ENCODE measurements at regions of chr10 and their contacts with region 1.

Region 1: GRCh38 chr10:48523820-48524758 is 80.8 kb downstream of the ARHGAP22 start:
- DNase-seq: no peak
- H3K4me3 ChIP-seq: peak overlapping the region; percentile 56 to 61 (median 59)
- H3K27ac ChIP-seq: peak overlapping the region in 3 of 4 donors; percentile 46 to 73 (median 64)
- H3K4me1 ChIP-seq: peaks cover 14 to 40% (median 35%) of the 10 kb centered on the region in 4 donors
- H3K27me3 ChIP-seq: peaks cover 0 to 12% (median 0%) of the 10 kb centered on the region in 4 donors
- CTCF ChIP-seq: peak; percentile 36 to 51 (median 41)
- EP300 ChIP-seq: no peak
- POLR2A ChIP-seq: no peak

Region 2: DNA sequence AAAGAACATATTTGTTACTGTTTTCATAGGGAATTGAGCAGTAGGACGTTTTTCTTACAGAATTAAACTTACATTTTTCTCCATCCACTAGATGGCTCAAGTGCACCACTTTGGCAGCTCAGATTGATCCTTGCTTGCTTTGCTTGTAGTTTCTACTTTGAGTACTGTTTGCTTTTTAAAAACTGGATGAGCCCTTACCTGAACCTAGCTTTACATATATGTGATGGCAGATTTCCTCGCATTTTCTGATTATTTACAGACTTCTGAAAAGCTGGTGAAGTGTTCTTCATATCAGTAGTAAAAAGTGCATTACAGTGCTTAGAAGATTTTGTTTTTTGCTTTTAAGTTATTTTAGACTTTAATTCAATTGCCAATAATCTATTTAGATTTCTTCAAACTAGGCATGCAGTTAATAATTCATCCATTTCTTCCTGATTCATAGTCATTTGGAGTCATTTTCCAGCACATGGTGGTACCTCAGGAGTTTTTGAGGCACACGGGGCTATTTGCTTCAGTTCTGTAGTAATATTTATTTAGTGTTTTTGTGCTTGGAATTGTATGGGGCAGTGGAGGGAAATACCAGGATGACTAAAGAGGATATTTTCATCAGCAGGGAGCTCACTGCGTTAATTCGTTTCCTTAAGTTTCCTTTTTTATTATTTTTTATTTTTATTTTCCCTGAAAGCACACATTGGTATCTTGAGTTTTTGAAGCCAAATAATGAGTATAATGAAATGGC is 160.3 kb before region 1 on chr10:
- intact Hi-C with region 1: loop called (anchors 10 kb)
- DNase-seq: no peak
- H3K4me3 ChIP-seq: no peak overlapping the region
- H3K27ac ChIP-seq: no peak overlapping the region
- H3K4me1 ChIP-seq: peaks cover 10 to 40% (median 37%) of the 10 kb centered on the region in 4 donors
- H3K27me3 ChIP-seq: no peaks in the 10 kb centered on the region
- CTCF ChIP-seq: peak; percentile 53 to 69 (median 57)
- EP300 ChIP-seq: no peak
- POLR2A ChIP-seq: no peak

Region 3: DNA sequence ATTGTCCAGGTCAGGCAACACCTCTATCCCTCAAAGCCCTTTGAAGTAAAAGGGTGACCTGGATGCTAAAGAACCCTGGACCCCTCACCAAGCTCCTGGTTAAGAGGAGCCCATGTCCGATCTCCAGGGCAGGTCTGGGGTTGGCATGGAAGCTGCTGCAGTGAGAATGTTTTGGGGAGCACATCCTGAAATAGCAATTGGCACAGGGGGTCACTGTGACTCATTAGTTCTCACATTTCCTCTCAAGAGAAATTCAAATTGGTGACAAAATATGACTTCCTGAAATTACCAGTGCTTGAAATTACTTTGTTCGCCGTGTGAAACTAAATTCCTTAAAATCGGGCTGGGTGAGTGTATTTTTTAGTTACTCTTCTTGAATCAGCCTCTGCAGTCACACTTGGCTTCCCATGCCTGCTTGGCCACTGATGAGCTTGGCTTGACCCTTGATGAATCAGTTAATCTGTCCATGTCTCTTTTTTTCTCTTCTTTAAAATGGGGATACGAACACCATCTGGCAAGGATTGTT is 99.6 kb after region 1 on chr10:
- intact Hi-C with region 1: no loop called
- DNase-seq: no peak
- H3K4me3 ChIP-seq: no peak overlapping the region
- H3K27ac ChIP-seq: no peak overlapping the region
- H3K4me1 ChIP-seq: no peaks in the 10 kb centered on the region
- H3K27me3 ChIP-seq: no peaks in the 10 kb centered on the region
- CTCF ChIP-seq: no peak
- EP300 ChIP-seq: no peak
- POLR2A ChIP-seq: no peak

Measured in esophagus muscularis mucosa (tissue), 4 donors.